ENCODE measurements at regions of chr4 and their contacts with region 1.

Region 1: GRCh38 chr4:142353149-142353738 is 492.9 kb downstream of the INPP4B start:
- DNase-seq: peak; percentile 16
- H3K4me3 ChIP-seq: no peak overlapping the region
- H3K27ac ChIP-seq: no peak overlapping the region
- H3K4me1 ChIP-seq: no peaks in the 10 kb centered on the region
- H3K27me3 ChIP-seq: no peaks in the 10 kb centered on the region
- CTCF ChIP-seq: peak; percentile 58 to 87 (median 80)
- POLR2A ChIP-seq: no peak

Region 2: DNA sequence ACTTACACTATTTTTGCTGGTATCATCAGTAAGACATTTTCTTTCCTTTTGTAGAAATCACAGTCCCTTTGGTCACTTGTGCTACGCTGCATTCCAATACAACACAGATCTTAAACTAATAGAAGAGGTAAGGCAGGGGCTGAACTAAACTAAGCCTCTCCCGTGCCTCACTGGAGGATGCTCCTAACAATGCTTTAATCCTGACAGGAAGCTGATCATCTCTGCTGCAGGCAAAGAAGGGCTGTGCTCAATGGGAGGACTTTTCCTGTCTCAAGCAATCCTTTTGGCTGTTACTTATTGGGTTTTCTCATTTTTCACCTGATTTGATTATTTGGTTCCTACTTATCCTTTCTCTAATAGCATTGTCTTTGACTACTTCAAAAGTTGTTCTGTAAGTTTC is 90.3 kb before region 1 on chr4:
- intact Hi-C with region 1: no loop called
- DNase-seq: no peak
- H3K4me3 ChIP-seq: no peak overlapping the region
- H3K27ac ChIP-seq: no peak overlapping the region
- H3K4me1 ChIP-seq: no peaks in the 10 kb centered on the region
- H3K27me3 ChIP-seq: no peaks in the 10 kb centered on the region
- CTCF ChIP-seq: no peak
- POLR2A ChIP-seq: no peak

Region 3: GRCh38 chr4:142719854-142720541 is 366.8 kb after region 1 on chr4:
- intact Hi-C with region 1: loop called (anchors 10 kb)
- DNase-seq: no peak
- H3K4me3 ChIP-seq: no peak overlapping the region
- H3K27ac ChIP-seq: no peak overlapping the region
- H3K4me1 ChIP-seq: no peaks in the 10 kb centered on the region
- H3K27me3 ChIP-seq: no peaks in the 10 kb centered on the region
- CTCF ChIP-seq: peak in 2 of 4 experiments; percentile 45 to 62
- POLR2A ChIP-seq: no peak

Region 4: DNA sequence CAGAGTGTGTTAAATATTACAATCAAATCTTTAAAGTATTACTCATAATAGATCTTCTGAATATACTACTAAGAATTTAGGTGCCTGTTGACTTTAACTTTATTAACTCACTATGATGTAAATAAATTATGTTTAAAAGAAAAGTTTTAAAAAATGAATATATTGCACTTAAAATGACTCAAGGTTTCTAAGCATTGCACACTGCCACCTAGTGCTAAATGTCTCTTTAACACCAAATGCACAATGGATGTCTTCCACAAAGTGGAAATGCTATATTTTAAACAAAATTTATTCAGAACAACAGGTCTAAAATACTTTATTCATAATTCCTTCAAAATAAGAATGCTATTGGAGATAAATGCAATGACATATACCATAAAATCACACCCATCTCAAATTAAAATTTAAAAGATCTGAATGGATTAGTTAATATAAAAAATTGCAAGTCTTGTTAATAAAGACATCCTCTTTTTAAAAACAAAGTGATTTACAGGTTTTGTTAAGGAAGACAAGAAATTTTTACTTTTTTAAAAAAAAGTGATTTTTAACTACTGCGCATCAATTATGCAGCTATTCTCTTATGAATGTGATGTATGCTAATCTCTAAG is 487.4 kb after region 1 on chr4:
- intact Hi-C with region 1: loop called (anchors 5 kb)
- DNase-seq: no peak
- H3K4me3 ChIP-seq: no peak overlapping the region
- H3K27ac ChIP-seq: no peak overlapping the region
- H3K4me1 ChIP-seq: no peaks in the 10 kb centered on the region
- H3K27me3 ChIP-seq: no peaks in the 10 kb centered on the region
- CTCF ChIP-seq: peak in 3 of 4 experiments; percentile 50 to 62 (median 50)
- POLR2A ChIP-seq: no peak

Measured in prostate gland (tissue), 2 donors.